ENCODE measurements at regions of chr4 and their contacts with region 1.

Region 1: GRCh38 chr4:150867148-150867547 is 147.9 kb downstream of the LRBA start:
- DNase-seq: no peak
- H3K4me3 ChIP-seq: no peak overlapping the region
- H3K27ac ChIP-seq: no peak overlapping the region
- H3K4me1 ChIP-seq: no peaks in the 10 kb centered on the region
- H3K27me3 ChIP-seq: no peaks in the 10 kb centered on the region
- CTCF ChIP-seq: peak; percentile 52 to 81

Region 2: GRCh38 chr4:149980941-149981340 is 886.2 kb before region 1 on chr4:
- intact Hi-C with region 1: loop called (anchors 10 kb)
- DNase-seq: peak; percentile 25 to 67
- H3K4me3 ChIP-seq: no peak overlapping the region
- H3K27ac ChIP-seq: no peak overlapping the region
- H3K4me1 ChIP-seq: peaks cover 0 to 11% (median 0%) of the 10 kb centered on the region in 4 donors
- H3K27me3 ChIP-seq: no peaks in the 10 kb centered on the region
- CTCF ChIP-seq: peak; percentile 69 to 83

Region 3: DNA sequence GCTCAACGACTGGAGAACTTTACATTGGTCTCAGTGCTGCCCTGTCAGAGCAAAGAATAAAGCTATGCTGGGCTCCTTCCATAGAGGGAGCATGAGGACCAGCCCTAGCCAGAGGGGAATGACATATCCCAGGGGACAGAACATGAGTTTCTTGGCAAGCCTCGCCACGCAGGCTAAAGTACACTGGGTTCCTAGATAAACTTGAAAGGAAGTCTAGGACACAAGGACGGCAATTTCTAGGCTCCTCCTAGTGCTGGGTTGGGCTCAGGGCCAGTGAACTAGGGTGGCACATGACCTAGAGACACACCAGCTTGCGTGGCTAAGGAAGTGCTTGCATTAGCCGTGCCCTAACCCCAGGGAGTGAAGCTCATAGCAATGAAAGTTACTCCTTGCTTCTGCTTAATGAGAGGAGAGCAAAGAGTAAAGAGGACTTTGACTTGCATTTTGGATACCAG is 144.2 kb before region 1 on chr4:
- intact Hi-C with region 1: loop called (anchors 2 kb)
- DNase-seq: peak; percentile 92 to 97
- H3K4me3 ChIP-seq: no peak overlapping the region
- H3K27ac ChIP-seq: peak overlapping the region; percentile 58 to 63
- H3K4me1 ChIP-seq: peaks cover 0 to 16% (median 9%) of the 10 kb centered on the region in 4 donors
- H3K27me3 ChIP-seq: no peaks in the 10 kb centered on the region
- CTCF ChIP-seq: peak; percentile 56 to 66

Measured in tibial artery (tissue), 4 donors.